Prostate gland (tissue), 2 donors: ENCODE measurements at regions of chr20 and their contacts with region 1.

Region 1: DNA sequence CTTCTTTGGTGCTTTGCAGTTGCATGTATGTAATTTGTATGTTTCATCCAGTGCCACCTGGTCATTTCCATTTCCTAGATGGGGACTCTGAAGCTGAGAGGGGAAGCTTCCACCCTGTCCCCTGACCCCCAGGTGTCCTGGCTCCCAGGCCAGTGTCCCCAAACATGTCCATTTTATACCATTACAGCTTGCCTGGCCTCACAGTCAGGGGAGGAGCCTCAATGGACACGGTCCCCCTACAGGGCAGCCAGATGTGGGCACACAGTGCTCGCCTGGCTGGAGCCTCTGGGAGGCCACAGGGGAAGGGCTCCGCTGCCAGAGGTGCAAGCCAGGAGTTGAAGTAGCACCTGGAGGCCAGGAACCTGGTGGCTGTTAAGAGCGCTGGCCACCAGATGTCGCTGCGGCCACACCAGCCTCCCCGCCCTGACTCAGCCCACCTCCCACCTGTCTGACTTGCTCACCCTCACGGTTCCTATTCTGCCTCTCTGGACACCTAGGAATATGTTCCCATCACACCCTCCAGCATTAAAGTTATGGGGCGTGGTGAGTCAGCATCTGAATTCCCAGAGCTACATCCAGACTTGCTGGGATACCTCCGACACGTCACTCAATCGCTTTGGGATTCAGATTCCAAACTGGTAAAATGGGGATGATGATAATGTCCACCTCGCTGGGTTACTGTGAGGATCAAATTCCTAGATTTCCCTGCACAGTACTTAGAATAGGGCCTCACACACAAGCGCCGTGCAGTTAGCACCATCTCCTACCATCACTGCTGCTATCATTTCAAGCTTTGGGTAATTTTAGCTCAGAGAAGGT is 107.4 kb downstream of the SULF2 start:
- DNase-seq: peak; percentile 46
- H3K4me3 ChIP-seq: no peak overlapping the region
- H3K27ac ChIP-seq: no peak overlapping the region
- H3K4me1 ChIP-seq: no peaks in the 10 kb centered on the region
- H3K27me3 ChIP-seq: no peaks in the 10 kb centered on the region
- CTCF ChIP-seq: peak; percentile 57 to 86 (median 82)
- POLR2A ChIP-seq: no peak

Region 2: DNA sequence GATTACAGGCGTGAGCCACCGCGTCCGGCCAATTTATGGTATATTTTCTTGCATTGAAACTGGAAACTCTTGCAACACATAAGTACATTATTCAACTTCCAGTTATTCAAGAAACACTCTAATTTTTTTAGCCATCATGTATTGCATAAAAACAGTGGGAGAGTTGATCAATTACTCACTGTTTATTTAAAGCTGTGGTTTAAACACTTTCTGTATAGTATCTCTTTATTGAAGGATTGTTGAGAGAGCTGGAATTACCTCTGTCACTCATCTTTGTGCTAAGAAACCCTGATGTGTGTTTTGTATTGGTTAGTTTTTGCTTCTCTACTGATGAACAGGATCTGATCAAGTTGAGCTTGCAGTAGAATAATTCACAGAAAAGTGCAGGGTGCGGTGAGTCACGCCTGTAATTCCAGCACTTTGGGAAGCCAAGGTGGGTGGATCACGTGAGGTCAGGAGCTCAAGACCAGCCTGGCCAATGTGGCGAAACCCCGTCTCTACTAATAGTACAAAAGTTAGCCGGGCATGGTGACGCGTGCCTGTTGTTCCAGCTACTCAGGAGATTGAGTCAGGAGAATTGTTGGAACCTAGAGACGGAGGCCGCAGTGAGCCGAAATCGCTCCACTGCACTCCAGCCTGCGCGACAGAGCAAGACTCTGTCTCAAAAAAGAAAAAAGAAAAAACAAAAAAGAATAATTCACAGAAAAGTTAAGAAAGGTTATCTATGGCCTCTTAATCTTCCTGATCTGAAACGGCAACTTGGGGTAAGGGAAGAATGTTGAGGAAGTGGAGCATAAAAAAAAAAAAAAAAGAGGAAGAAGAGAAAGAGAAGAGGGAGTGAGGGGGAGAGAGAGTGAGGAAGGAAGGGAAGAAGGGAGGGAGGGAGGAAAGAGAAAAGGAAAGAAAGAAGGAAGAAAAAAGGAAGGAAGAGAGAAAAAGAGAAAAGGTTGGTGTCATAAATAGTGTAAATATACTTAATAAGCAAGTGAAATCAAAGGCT is 245.3 kb before region 1 on chr20:
- intact Hi-C with region 1: no loop called
- DNase-seq: no peak
- H3K4me3 ChIP-seq: no peak overlapping the region
- H3K27ac ChIP-seq: no peak overlapping the region
- H3K4me1 ChIP-seq: no peaks in the 10 kb centered on the region
- H3K27me3 ChIP-seq: no peaks in the 10 kb centered on the region
- CTCF ChIP-seq: no peak
- POLR2A ChIP-seq: no peak

Region 3: DNA sequence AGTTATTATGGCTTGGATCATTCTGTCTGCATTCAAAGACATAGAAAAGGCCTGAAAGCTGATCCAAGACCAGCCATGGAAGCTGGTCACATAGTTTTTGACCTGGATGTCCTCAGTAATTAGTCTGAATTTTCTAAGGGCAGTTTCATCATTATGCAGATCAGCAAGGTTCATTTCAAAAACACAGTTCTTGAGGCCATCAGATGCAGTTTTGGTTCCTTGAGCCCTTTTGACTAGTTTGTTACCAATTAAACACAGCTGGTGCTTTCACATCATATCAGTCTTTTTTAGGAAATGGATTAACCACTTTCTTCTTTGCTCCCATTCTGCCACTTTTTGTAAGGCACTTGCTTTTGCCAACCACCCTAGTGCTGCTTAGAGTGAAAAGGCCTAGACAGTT is 46.8 kb before region 1 on chr20:
- intact Hi-C with region 1: no loop called
- DNase-seq: no peak
- H3K4me3 ChIP-seq: no peak overlapping the region
- H3K27ac ChIP-seq: no peak overlapping the region
- H3K4me1 ChIP-seq: no peaks in the 10 kb centered on the region
- H3K27me3 ChIP-seq: no peaks in the 10 kb centered on the region
- CTCF ChIP-seq: no peak
- POLR2A ChIP-seq: no peak

Region 4: DNA sequence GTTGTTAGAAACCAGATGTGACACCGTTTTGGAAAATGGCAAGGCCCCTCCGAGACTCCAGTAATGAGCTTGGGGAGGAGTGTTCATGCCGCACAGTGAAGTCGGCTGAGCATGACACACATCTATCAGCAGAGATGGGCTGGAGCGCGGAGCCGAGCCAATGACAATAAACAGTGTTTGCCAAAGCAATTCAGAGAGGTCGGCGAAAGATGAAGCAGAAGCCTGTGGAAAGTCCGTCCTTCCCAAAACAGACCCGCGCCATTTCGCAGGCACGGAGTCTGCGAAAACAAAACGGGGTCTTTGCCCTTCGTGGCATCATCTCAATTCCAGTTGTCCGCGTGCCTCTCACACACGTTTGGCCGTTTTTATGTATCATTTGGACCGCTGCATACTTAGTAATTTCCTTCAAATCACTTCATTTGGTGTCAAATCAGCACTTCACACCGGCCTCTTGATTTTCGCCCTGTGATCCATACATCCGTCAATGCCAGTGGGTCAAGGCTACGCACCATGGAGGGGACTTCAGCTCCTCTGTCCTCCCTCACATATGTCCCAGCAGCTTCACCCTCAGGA is 36.1 kb after region 1 on chr20:
- intact Hi-C with region 1: no loop called
- DNase-seq: no peak
- H3K4me3 ChIP-seq: no peak overlapping the region
- H3K27ac ChIP-seq: no peak overlapping the region
- H3K4me1 ChIP-seq: no peaks in the 10 kb centered on the region
- H3K27me3 ChIP-seq: no peaks in the 10 kb centered on the region
- CTCF ChIP-seq: no peak
- POLR2A ChIP-seq: no peak

Region 5: GRCh38 chr20:47725248-47725973 is 47.6 kb after region 1 on chr20:
- intact Hi-C with region 1: loop called (anchors 2 kb)
- DNase-seq: peak; percentile 65
- H3K4me3 ChIP-seq: no peak overlapping the region
- H3K27ac ChIP-seq: no peak overlapping the region
- H3K4me1 ChIP-seq: no peaks in the 10 kb centered on the region
- H3K27me3 ChIP-seq: no peaks in the 10 kb centered on the region
- CTCF ChIP-seq: peak; percentile 75 to 87 (median 83)
- POLR2A ChIP-seq: no peak

Region 6: GRCh38 chr20:47929363-47930123 is 251.7 kb after region 1 on chr20:
- intact Hi-C with region 1: loop called (anchors 10 kb)
- DNase-seq: no peak
- H3K4me3 ChIP-seq: no peak overlapping the region
- H3K27ac ChIP-seq: no peak overlapping the region
- H3K4me1 ChIP-seq: no peaks in the 10 kb centered on the region
- H3K27me3 ChIP-seq: peaks cover 3% of the 10 kb centered on the region
- CTCF ChIP-seq: no peak
- POLR2A ChIP-seq: no peak

Region 7: GRCh38 chr20:48295445-48295963 is 617.7 kb after region 1 on chr20:
- intact Hi-C with region 1: loop called (anchors 10 kb)
- DNase-seq: no peak
- H3K4me3 ChIP-seq: no peak overlapping the region
- H3K27ac ChIP-seq: no peak overlapping the region
- H3K4me1 ChIP-seq: no peaks in the 10 kb centered on the region
- H3K27me3 ChIP-seq: no peaks in the 10 kb centered on the region
- CTCF ChIP-seq: peak in 2 of 4 experiments; percentile 33 to 34
- POLR2A ChIP-seq: no peak

Region 8: DNA sequence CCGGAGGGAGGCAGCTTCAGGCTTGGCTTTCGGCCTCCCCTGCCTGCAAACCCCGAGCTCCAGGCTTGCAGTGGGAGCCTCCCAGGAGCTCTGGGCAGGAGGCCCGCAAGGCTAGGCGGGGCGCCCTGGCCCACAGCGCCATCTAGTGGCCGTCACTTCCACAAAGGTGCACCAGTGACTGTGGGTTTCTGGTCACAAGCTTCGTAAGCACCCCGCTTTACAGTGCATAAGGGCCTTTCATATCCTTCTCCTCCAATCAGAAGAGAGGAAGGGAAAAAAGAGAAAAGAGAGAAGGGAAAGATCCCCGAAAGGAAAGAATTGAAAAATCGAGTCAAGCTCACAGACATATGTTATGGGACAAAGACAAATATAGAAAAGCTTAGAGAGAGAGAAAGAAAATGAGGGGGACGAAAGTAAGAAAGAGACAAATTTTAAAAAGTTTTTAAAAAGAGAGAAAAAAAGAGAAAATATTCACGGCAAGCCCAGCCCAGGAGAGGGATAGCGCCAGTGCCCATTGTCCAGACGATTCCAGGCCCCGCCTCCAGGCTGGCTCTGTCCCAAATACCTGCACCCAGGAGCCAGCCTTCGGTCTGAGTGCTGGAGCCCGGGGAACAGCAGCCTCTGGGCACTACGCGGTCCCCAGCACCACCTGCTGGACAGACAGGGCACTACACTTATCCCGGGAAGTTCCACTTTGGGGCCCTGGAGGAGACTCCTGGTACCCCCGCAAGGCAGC is 942.8 kb after region 1 on chr20:
- intact Hi-C with region 1: loop called (anchors 5 kb)
- DNase-seq: peak; percentile 88
- H3K4me3 ChIP-seq: peak overlapping the region in 1 of 2 donors; percentile 21
- H3K27ac ChIP-seq: no peak overlapping the region
- H3K4me1 ChIP-seq: peaks cover 2% of the 10 kb centered on the region
- H3K27me3 ChIP-seq: no peaks in the 10 kb centered on the region
- CTCF ChIP-seq: peak; percentile 80 to 97 (median 93)
- POLR2A ChIP-seq: no peak